ENCODE measurements at regions of chr19 and their contacts with region 1.

Region 1: GRCh38 chr19:40465557-40466150 is at the start of gene BLVRB:
- DNase-seq: peak; percentile 99 to 100
- ATAC-seq: peak; percentile 88
- total RNA-seq, gene BLVRB: 77.4 to 79.6 TPM

Region 2: GRCh38 chr19:40305403-40305802 is 160.3 kb before region 1 on chr19:
- intact Hi-C with region 1: loop called in 1 of 2 experiments (anchors 10 kb)
- DNase-seq: peak; percentile 74 to 79
- ATAC-seq: peak; percentile 75